Cardiac septum (tissue), 1 donor: ENCODE measurements at regions of chr10 and their contacts with region 1.

Region 1: DNA sequence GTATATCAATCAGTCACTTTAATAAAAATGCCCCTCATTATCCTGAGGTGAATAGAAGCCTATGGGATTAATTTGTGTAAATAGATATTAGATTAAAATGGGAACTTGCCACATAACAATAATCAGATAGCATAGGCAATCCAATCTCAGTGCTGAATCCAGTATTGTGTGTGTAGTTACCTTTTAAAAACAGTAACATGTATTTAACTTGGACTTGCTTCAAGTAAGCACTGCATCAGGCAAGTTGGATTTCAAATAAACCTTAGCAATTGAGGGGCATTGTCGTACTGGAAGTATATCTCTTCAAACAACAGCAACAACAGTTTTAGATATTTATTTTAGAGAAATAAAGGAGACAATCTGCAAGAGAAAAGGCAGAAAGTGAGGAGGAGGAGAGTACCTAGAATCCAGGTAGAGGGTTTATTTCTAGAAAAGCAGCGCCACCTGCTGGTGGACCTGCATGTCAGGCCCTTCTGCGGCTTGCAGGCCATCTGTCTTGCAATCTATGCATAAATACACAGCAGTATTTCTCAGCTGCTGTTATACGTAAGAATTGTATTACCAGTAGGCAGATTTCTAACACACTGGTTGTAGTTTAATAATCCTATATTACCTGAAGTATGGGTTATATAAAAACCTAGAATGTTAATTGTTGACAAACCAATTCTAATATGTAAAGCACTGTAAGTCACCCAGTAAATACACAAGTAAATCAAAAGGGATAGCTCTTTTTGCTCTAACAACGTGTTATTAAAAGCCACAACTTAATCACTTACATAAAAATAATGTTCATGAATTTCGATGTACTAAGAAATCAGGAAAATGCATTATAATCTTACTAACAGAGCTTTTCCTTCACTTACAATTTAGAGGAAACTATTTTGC is 652.8 kb downstream of the KCNMA1 start:
- DNase-seq: peak; percentile 78

Region 2: GRCh38 chr10:76303682-76304316 is 681.0 kb before region 1 on chr10:
- intact Hi-C with region 1: loop called (anchors 10 kb)
- DNase-seq: peak; percentile 77

Region 3: DNA sequence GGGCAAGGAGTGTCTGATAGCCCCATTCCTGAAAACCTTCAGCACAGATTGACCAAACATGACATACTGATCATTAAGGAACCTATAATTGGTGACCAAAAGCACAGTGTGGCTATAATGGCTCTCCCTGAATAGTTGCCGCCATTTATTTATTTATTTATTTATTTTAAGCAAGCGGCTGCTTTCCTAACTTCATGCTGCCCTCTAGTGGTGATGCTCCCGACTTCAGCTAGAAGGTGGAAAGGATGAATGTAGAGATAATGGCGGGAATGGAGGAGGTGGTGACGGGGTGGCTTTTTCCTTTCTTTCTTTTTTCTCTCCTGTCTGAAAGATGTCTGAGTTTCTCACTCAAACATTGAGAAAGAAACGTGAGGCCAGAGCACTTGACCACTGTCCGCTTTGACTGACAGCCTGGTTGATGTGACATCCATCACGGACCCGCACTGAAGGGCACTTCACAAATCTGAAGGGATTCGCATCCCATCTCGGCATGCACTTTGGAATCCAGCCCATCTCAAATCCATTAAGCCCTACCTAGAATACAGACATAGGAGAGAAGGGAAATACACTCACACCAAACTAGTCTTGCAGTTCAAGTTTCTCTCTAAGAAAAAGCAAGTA is 437.3 kb before region 1 on chr10:
- intact Hi-C with region 1: loop called (anchors 10 kb)
- DNase-seq: peak; percentile 77